ENCODE measurements at regions of chr12 and their contacts with region 1.

Region 1: DNA sequence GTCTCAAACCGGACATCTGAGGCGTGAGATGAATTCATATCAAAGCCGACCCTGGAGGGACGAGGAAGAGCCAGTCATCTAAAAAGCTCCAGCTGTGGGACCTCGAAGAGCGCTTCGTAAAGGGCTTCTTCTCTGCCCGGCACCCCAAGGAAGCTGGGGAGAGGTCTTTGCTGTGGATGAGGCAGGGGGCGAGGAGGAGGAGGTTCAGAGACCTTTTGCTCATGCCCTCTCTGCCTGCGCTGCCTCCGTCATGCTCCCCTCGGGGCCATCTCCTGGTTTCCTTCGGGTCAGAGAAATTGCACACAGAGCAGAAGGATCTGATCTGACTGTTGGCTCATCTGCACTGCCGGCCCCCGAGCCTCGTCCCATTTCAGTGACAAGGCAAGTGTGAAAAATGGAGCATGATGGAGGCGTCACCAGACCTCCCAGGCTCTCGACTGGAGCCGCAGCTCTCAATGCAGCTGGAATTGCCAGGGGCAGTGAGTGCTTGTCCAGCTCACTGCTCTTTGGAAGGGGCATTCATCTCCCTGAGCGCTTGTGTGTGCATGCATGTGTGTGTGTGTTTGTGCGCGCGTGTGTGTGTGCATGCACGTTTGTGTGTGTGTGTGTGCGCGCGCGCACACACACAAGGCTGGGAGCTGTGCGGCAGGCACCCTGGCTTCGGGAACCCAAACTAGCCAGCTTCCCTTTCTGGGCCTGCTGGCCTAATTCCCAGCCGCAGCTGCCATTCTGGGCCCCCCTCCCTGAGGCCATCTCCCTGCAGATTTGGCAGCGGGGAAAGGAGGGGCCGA is 9.2 kb downstream of the CABP1 start:
- DNase-seq: no peak
- H3K4me3 ChIP-seq: no peak overlapping the region
- H3K4me3 Mint-ChIP-seq: peak overlapping the region in 3 of 7 donors; percentile 16 to 30 (median 22)
- H3K27ac ChIP-seq: no peak overlapping the region
- H3K27ac Mint-ChIP-seq: peak overlapping the region in 1 of 8 donors; percentile 48
- H3K4me1 ChIP-seq: peaks cover 8% of the 10 kb centered on the region
- H3K4me1 Mint-ChIP-seq: peaks cover 10 to 12% (median 10%) of the 10 kb centered on the region in 3 donors
- H3K27me3 ChIP-seq: peaks cover 30% of the 10 kb centered on the region
- H3K27me3 Mint-ChIP-seq: peaks cover 40 to 67% of the 10 kb centered on the region in 2 donors

Region 2: GRCh38 chr12:120327593-120327992 is 322.0 kb before region 1 on chr12 and contains the start of gene PLA2G1B:
- CTCF ChIA-PET with region 1: interaction called, 13 read pairs
- POLR2A ChIA-PET with region 1: no interaction called
- DNase-seq: no peak
- H3K4me3 ChIP-seq: no peak within 1 kb of the TSS
- H3K4me3 Mint-ChIP-seq: peak within 1 kb of the TSS in 2 of 7 donors; percentile 32 to 48
- H3K27ac ChIP-seq: no peak within 1 kb of the TSS
- H3K27ac Mint-ChIP-seq: no peak within 1 kb of the TSS
- H3K4me1 ChIP-seq: no peaks in the 10 kb centered on the region
- H3K4me1 Mint-ChIP-seq: peaks cover 6 to 12% (median 7%) of the 10 kb centered on the region in 3 donors
- H3K27me3 ChIP-seq: no peaks in the 10 kb centered on the region
- H3K27me3 Mint-ChIP-seq: peaks cover 4 to 13% of the 10 kb centered on the region in 2 donors
- total RNA-seq, gene PLA2G1B: not detected

Region 3: GRCh38 chr12:120588948-120589930 is 60.4 kb before region 1 on chr12:
- CTCF ChIA-PET with region 1: interaction called, 85 read pairs
- POLR2A ChIA-PET with region 1: no interaction called
- DNase-seq: no peak
- H3K4me3 ChIP-seq: no peak overlapping the region
- H3K4me3 Mint-ChIP-seq: no peak overlapping the region
- H3K27ac ChIP-seq: no peak overlapping the region
- H3K27ac Mint-ChIP-seq: peak overlapping the region in 1 of 8 donors; percentile 39
- H3K4me1 ChIP-seq: no peaks in the 10 kb centered on the region
- H3K4me1 Mint-ChIP-seq: peaks cover under 1 to 1% (median 1%) of the 10 kb centered on the region in 3 donors
- H3K27me3 ChIP-seq: no peaks in the 10 kb centered on the region
- H3K27me3 Mint-ChIP-seq: peaks cover 0 to 3% of the 10 kb centered on the region in 2 donors

Region 4: GRCh38 chr12:120666571-120667390 is 17.1 kb after region 1 on chr12:
- CTCF ChIA-PET with region 1: interaction called, 12 read pairs
- POLR2A ChIA-PET with region 1: no interaction called
- DNase-seq: no peak
- H3K4me3 ChIP-seq: no peak overlapping the region
- H3K4me3 Mint-ChIP-seq: no peak overlapping the region
- H3K27ac ChIP-seq: no peak overlapping the region
- H3K27ac Mint-ChIP-seq: no peak overlapping the region
- H3K4me1 ChIP-seq: no peaks in the 10 kb centered on the region
- H3K4me1 Mint-ChIP-seq: peaks cover 0 to 2% (median 0%) of the 10 kb centered on the region in 3 donors
- H3K27me3 ChIP-seq: no peaks in the 10 kb centered on the region
- H3K27me3 Mint-ChIP-seq: peaks cover 7 to 8% of the 10 kb centered on the region in 2 donors

Region 5: GRCh38 chr12:120698665-120699064 is 49.0 kb after region 1 on chr12:
- CTCF ChIA-PET with region 1: interaction called, 19 read pairs
- POLR2A ChIA-PET with region 1: no interaction called
- DNase-seq: no peak
- H3K4me3 ChIP-seq: no peak overlapping the region
- H3K4me3 Mint-ChIP-seq: no peak overlapping the region
- H3K27ac ChIP-seq: no peak overlapping the region
- H3K27ac Mint-ChIP-seq: peak overlapping the region in 1 of 8 donors; percentile 94
- H3K4me1 ChIP-seq: no peaks in the 10 kb centered on the region
- H3K4me1 Mint-ChIP-seq: peaks cover 0 to 5% (median 4%) of the 10 kb centered on the region in 3 donors
- H3K27me3 ChIP-seq: no peaks in the 10 kb centered on the region
- H3K27me3 Mint-ChIP-seq: peaks cover 0 to under 1% of the 10 kb centered on the region in 2 donors

Region 6: GRCh38 chr12:120971299-120972179 is 321.9 kb after region 1 on chr12:
- CTCF ChIA-PET with region 1: interaction called, 29 read pairs
- POLR2A ChIA-PET with region 1: no interaction called
- DNase-seq: peak in 2 of 5 donors; percentile 48 to 66
- H3K4me3 ChIP-seq: no peak overlapping the region
- H3K4me3 Mint-ChIP-seq: no peak overlapping the region
- H3K27ac ChIP-seq: no peak overlapping the region
- H3K27ac Mint-ChIP-seq: peak overlapping the region in 1 of 8 donors; percentile 20
- H3K4me1 ChIP-seq: no peaks in the 10 kb centered on the region
- H3K4me1 Mint-ChIP-seq: peaks cover 0 to 4% (median 2%) of the 10 kb centered on the region in 3 donors
- H3K27me3 ChIP-seq: no peaks in the 10 kb centered on the region
- H3K27me3 Mint-ChIP-seq: no peaks in the 10 kb centered on the region